T-cell (primary cell): ENCODE measurements at regions of chr6 and their contacts with region 1.

Region 1: GRCh38 chr6:5471044-5471443 is 209.7 kb downstream of the FARS2 start:
- DNase-seq: peak; percentile 15 to 73 (median 56)
- ATAC-seq: peak; percentile 55 to 79 (median 74)
- H3K4me3 ChIP-seq: no peak overlapping the region
- H3K4me3 Mint-ChIP-seq: no peak overlapping the region
- H3K27ac ChIP-seq: no peak overlapping the region
- H3K27ac Mint-ChIP-seq: no peak overlapping the region
- H3K4me1 ChIP-seq: peaks cover 7 to 8% of the 10 kb centered on the region in 2 experiments
- H3K4me1 Mint-ChIP-seq: peaks cover 0 to 20% (median 0%) of the 10 kb centered on the region in 3 donors
- H3K27me3 ChIP-seq: no peaks in the 10 kb centered on the region
- H3K27me3 Mint-ChIP-seq: no peaks in the 10 kb centered on the region

Region 2: GRCh38 chr6:5446362-5447075 is 24.5 kb before region 1 on chr6:
- CTCF ChIA-PET with region 1: no interaction called
- POLR2A ChIA-PET with region 1: no interaction called
- DNase-seq: no peak
- ATAC-seq: no peak
- H3K4me3 ChIP-seq: no peak overlapping the region
- H3K4me3 Mint-ChIP-seq: no peak overlapping the region
- H3K27ac ChIP-seq: no peak overlapping the region
- H3K27ac Mint-ChIP-seq: no peak overlapping the region
- H3K4me1 ChIP-seq: no peaks in the 10 kb centered on the region
- H3K4me1 Mint-ChIP-seq: peaks cover 0 to 1% (median 0%) of the 10 kb centered on the region in 3 donors
- H3K27me3 ChIP-seq: no peaks in the 10 kb centered on the region
- H3K27me3 Mint-ChIP-seq: no peaks in the 10 kb centered on the region

Region 3: DNA sequence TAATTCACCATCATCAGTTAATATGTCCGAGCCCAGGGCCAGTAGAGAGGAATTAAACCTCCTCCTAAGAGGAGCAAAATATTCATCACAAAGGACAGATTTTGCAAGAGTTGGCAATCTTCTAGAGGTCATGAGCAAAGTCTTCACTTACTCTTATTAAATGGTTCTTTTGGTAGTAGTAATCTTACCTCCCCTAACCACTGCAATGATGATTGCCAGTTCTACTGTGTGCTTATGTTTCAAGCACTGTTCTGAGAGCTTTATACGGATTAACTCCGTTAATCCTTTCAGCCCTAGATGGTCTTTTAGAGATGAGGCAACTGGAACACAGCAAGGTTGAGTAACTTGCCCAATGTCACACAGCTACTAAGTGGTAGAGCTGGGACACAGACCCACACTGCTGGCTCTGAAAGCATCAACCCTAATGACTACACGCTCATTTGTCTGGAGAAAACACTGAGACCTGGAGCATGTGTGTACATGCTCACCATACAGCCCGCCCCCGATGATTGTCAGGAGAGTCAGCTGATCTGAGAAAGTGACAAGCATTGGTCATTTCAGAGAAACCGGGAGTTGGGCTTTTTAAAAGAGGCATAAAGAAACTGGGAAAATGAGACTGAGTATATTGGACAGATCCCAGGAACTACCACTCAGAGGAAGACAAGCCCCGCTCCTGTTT is 259.7 kb after region 1 on chr6:
- CTCF ChIA-PET with region 1: no interaction called
- POLR2A ChIA-PET with region 1: no interaction called
- DNase-seq: no peak
- ATAC-seq: no peak
- H3K4me3 ChIP-seq: no peak overlapping the region
- H3K4me3 Mint-ChIP-seq: no peak overlapping the region
- H3K27ac ChIP-seq: no peak overlapping the region
- H3K27ac Mint-ChIP-seq: no peak overlapping the region
- H3K4me1 ChIP-seq: no peaks in the 10 kb centered on the region
- H3K4me1 Mint-ChIP-seq: peaks cover 4 to 43% (median 4%) of the 10 kb centered on the region in 3 donors
- H3K27me3 ChIP-seq: no peaks in the 10 kb centered on the region
- H3K27me3 Mint-ChIP-seq: no peaks in the 10 kb centered on the region

Region 4: DNA sequence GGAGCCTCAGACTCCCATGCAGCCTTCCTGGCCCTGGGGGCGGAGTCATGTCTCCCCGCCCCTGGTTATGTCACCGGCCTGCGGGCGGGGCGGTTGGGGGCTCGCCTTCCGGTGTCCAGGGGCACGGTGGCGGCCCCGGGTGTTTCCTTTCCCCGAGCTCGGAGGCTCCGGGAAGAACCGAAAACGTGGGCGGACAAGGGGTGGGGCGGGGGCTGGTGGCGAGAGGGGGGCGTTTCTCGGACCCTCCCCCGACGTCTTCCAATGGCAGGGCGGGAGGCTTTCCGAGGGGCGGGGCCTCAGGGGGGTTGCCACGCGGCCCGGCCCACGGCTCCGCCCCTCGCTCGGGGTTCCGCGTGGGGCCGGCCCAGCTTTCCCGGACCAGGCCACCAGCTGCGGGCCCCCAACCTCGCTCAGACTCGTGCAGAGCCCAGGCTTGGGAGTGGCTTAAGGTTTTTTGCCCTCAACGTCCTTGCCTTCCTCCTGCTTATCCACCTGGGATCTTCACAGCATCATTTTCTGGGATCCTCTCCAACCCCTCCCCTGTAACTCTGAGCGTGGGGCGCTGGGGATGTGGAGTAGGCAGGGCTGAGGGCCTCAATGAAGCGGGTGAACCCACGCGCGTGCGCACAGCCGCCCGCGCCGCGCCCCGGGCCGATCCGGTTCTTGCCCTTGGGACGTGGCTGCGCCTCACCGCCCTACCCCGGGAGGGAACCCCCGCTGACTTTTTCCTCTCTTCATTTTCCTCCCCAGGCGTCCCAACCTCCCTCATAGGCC is 537.8 kb after region 1 on chr6:
- CTCF ChIA-PET with region 1: interaction called in 1 of 2 experiments, 12 read pairs
- POLR2A ChIA-PET with region 1: no interaction called
- DNase-seq: peak in 4 of 35 experiments; percentile 24 to 49 (median 24)
- ATAC-seq: peak; percentile 49 to 62 (median 55)
- H3K4me3 ChIP-seq: peak overlapping the region; percentile 38 to 75
- H3K4me3 Mint-ChIP-seq: peak overlapping the region; percentile 65 to 86 (median 71)
- H3K27ac ChIP-seq: no peak overlapping the region
- H3K27ac Mint-ChIP-seq: no peak overlapping the region
- H3K4me1 ChIP-seq: peaks cover 20 to 45% of the 10 kb centered on the region in 2 experiments
- H3K4me1 Mint-ChIP-seq: peaks cover 35 to 50% (median 45%) of the 10 kb centered on the region in 3 donors
- H3K27me3 ChIP-seq: peaks cover 31 to 58% of the 10 kb centered on the region in 2 experiments
- H3K27me3 Mint-ChIP-seq: peaks cover 57 to 69% of the 10 kb centered on the region in 2 donors

Region 5: DNA sequence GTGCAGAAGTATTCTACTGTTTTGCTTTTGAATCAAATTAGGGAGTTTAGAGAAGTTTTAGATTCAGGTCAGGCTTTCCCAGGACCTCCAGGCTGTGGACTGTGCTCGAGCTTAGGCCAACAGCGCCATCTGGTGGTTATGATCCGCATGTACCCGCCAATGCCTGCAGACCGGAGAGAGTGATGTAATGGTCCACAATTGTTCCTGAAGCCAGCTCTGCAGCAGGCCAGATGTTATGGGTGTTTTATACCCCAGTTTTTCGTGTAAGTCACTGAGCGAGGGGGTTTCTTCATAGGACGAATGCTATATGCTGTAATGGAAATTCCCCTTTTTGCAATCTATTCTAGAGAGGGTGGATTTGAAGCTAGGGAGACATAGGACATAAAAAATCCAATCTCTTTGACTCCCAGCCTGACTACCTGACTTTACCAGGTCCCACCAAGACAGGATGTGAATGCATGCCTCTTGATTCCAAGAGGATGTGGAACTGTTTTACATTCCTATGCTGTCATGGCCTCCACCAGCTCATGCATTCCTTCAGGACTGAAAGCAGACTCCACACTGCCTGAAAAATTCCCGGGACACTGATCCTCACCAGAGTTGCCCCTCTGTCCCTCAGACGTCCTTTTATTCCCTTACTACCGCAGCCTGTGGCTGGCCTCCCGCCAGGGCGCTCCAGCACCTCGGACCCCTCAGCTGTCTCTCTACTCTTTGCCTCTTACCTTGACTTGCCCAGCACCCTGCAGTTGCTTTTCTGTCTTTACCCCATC is 1076.3 kb after region 1 on chr6:
- CTCF ChIA-PET with region 1: interaction called in 1 of 2 experiments, 17 read pairs
- POLR2A ChIA-PET with region 1: no interaction called
- DNase-seq: peak; percentile 43 to 90 (median 73)
- ATAC-seq: peak; percentile 91 to 95 (median 92)
- H3K4me3 ChIP-seq: peak overlapping the region; percentile 26 to 70
- H3K4me3 Mint-ChIP-seq: peak overlapping the region; percentile 63 to 74 (median 68)
- H3K27ac ChIP-seq: no peak overlapping the region
- H3K27ac Mint-ChIP-seq: no peak overlapping the region
- H3K4me1 ChIP-seq: peaks cover 2 to 15% of the 10 kb centered on the region in 2 experiments
- H3K4me1 Mint-ChIP-seq: peaks cover 5 to 10% (median 6%) of the 10 kb centered on the region in 3 donors
- H3K27me3 ChIP-seq: peaks cover 2 to 56% of the 10 kb centered on the region in 2 experiments
- H3K27me3 Mint-ChIP-seq: peaks cover 20 to 51% of the 10 kb centered on the region in 2 donors